Activated CD8-positive, alpha-beta T cell treated with anti-CD3 and anti-CD28 coated beads, Interleukin-2, amount 10 ng/mL, durations not matched to agents 7 days and 5 days (primary cell): ENCODE measurements at regions of chr16 and their contacts with region 1.

Region 1: GRCh38 chr16:31868691-31869167 is 4.9 kb upstream of the ZNF267 start:
- DNase-seq: peak; percentile 89
- ATAC-seq: peak; percentile 40
- H3K4me3 Mint-ChIP-seq: peak overlapping the region; percentile 64
- H3K27ac Mint-ChIP-seq: peak overlapping the region; percentile 82
- H3K4me1 Mint-ChIP-seq: peaks cover 65% of the 10 kb centered on the region
- H3K27me3 Mint-ChIP-seq: no peaks in the 10 kb centered on the region

Region 2: GRCh38 chr16:31700526-31701388 is 168.0 kb before region 1 on chr16:
- CTCF ChIA-PET with region 1: interaction called, 12 read pairs
- POLR2A ChIA-PET with region 1: interaction called, 12 read pairs
- DNase-seq: peak; percentile 92
- ATAC-seq: peak; percentile 82
- H3K4me3 Mint-ChIP-seq: peak overlapping the region; percentile 90
- H3K27ac Mint-ChIP-seq: peak overlapping the region; percentile 92
- H3K4me1 Mint-ChIP-seq: peaks cover 38% of the 10 kb centered on the region
- H3K27me3 Mint-ChIP-seq: no peaks in the 10 kb centered on the region

Region 3: GRCh38 chr16:31734265-31734664 is 134.5 kb before region 1 on chr16:
- CTCF ChIA-PET with region 1: no interaction called
- POLR2A ChIA-PET with region 1: no interaction called
- DNase-seq: no peak
- ATAC-seq: no peak
- H3K4me3 Mint-ChIP-seq: no peak overlapping the region
- H3K27ac Mint-ChIP-seq: no peak overlapping the region
- H3K4me1 Mint-ChIP-seq: no peaks in the 10 kb centered on the region
- H3K27me3 Mint-ChIP-seq: no peaks in the 10 kb centered on the region

Region 4: GRCh38 chr16:31880322-31880979 is 11.7 kb after region 1 on chr16:
- CTCF ChIA-PET with region 1: interaction called, 19 read pairs
- POLR2A ChIA-PET with region 1: interaction called, 13 read pairs
- DNase-seq: peak; percentile 53
- ATAC-seq: peak; percentile 61
- H3K4me3 Mint-ChIP-seq: no peak overlapping the region
- H3K27ac Mint-ChIP-seq: peak overlapping the region; percentile 72
- H3K4me1 Mint-ChIP-seq: peaks cover 74% of the 10 kb centered on the region
- H3K27me3 Mint-ChIP-seq: no peaks in the 10 kb centered on the region